ENCODE measurements at regions of chr14 and their contacts with region 1.

Region 1: DNA sequence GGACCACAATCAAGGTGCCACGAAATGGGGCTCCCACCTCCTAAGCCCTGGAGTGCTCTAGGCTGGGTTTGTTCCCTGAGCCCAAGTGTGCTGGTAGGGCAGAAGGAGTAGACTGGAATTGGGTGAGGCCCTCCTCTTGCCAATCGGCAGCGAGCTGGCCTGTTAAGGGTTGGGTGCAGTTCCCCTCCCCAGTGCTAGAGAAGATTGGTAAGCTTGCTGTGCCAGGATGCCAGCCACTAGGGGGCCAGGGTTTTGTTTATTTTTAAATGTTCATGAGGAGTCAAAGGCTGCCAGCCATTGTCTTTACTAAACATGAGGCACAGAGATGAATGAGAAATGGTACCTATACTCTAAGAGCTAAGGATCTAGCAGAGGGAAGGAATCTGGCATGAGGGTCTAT is 79.7 kb downstream of the SPTB start:
- DNase-seq: peak; percentile 50
- H3K4me3 ChIP-seq: no peak overlapping the region
- H3K27ac ChIP-seq: no peak overlapping the region
- H3K4me1 ChIP-seq: peaks cover 2 to 27% of the 10 kb centered on the region in 2 experiments
- H3K27me3 ChIP-seq: no peaks in the 10 kb centered on the region
- CTCF ChIP-seq: peak; percentile 75
- EP300 ChIP-seq: no peak
- RAD21 ChIP-seq: peak; percentile 22; the same call in 1 of the 2 replicates

Region 2: GRCh38 chr14:64788668-64789067 is 11.3 kb before region 1 on chr14:
- CTCF ChIA-PET with region 1: interaction called, 26 read pairs
- POLR2A ChIA-PET with region 1: no interaction called
- DNase-seq: no peak
- H3K4me3 ChIP-seq: no peak overlapping the region
- H3K27ac ChIP-seq: peak overlapping the region in 1 of 2 experiments; percentile 58; a peak in 2 of 4 replicates
- H3K4me1 ChIP-seq: peaks cover 0 to 6% of the 10 kb centered on the region in 2 experiments; a peak in 1 of 4 replicates
- H3K27me3 ChIP-seq: no peaks in the 10 kb centered on the region
- CTCF ChIP-seq: no peak
- EP300 ChIP-seq: peak in 1 of 2 experiments; percentile 63; a peak in 1 of 4 replicates
- RAD21 ChIP-seq: no peak

Region 3: DNA sequence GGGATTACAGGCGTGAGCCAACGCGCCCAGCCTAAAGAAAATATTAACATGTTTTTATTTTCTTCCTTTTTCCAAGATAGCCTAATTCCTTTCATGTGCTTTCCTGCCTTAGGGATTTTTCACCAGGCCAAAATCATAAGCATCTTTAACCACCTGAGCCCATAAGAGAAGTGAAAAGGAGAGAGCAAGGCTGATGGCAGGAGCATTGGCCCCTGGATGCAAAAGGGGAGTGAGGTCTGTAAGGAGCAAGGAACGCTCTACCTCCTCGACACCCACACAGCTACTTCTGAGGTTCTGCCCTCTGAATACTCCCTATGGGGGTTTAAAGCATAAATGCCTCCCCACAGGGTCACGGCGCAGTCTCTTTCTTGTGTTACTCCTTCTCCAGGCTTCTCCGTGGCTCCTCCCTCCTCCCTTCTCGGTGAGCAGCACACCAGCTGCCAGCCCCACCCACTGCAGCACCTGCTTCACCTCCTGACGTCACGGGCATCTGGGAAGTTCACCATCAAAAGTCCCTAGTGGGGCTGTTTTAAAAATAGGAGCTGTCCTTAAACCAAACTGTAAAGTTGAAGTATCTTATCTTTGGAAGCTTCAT is 12.3 kb after region 1 on chr14:
- CTCF ChIA-PET with region 1: interaction called, 63 read pairs
- POLR2A ChIA-PET with region 1: interaction called, 3 read pairs
- DNase-seq: no peak
- H3K4me3 ChIP-seq: no peak overlapping the region
- H3K27ac ChIP-seq: no peak overlapping the region
- H3K4me1 ChIP-seq: peaks cover 4 to 6% of the 10 kb centered on the region in 2 experiments; a peak in 3 of 4 replicates
- H3K27me3 ChIP-seq: no peaks in the 10 kb centered on the region
- CTCF ChIP-seq: no peak
- EP300 ChIP-seq: no peak
- RAD21 ChIP-seq: no peak

Region 4: GRCh38 chr14:64841121-64841651 is 41.2 kb after region 1 on chr14:
- CTCF ChIA-PET with region 1: interaction called, 11 read pairs
- POLR2A ChIA-PET with region 1: no interaction called
- DNase-seq: no peak
- H3K4me3 ChIP-seq: no peak overlapping the region
- H3K27ac ChIP-seq: no peak overlapping the region
- H3K4me1 ChIP-seq: peaks cover 4 to 5% of the 10 kb centered on the region in 2 experiments; a peak in 3 of 4 replicates
- H3K27me3 ChIP-seq: no peaks in the 10 kb centered on the region
- CTCF ChIP-seq: peak; percentile 66
- EP300 ChIP-seq: no peak
- RAD21 ChIP-seq: no peak

Region 5: GRCh38 chr14:64880221-64881121 is 80.5 kb after region 1 on chr14:
- CTCF ChIA-PET with region 1: interaction called, 18 read pairs
- POLR2A ChIA-PET with region 1: no interaction called
- DNase-seq: peak; percentile 89
- H3K4me3 ChIP-seq: peak overlapping the region; percentile 54 to 60
- H3K27ac ChIP-seq: peak overlapping the region in 1 of 2 experiments; percentile 55; a peak in 2 of 4 replicates
- H3K4me1 ChIP-seq: peaks cover 0 to 17% of the 10 kb centered on the region in 2 experiments; a peak in 2 of 4 replicates
- H3K27me3 ChIP-seq: peaks cover 44% of the 10 kb centered on the region
- CTCF ChIP-seq: no peak
- EP300 ChIP-seq: no peak
- RAD21 ChIP-seq: no peak

Region 6: GRCh38 chr14:64899958-64900357 is 100.0 kb after region 1 on chr14:
- CTCF ChIA-PET with region 1: interaction called, 13 read pairs
- POLR2A ChIA-PET with region 1: no interaction called
- DNase-seq: no peak
- H3K4me3 ChIP-seq: no peak overlapping the region
- H3K27ac ChIP-seq: no peak overlapping the region
- H3K4me1 ChIP-seq: no peaks in the 10 kb centered on the region
- H3K27me3 ChIP-seq: no peaks in the 10 kb centered on the region
- CTCF ChIP-seq: no peak
- EP300 ChIP-seq: no peak
- RAD21 ChIP-seq: no peak

Region 7: DNA sequence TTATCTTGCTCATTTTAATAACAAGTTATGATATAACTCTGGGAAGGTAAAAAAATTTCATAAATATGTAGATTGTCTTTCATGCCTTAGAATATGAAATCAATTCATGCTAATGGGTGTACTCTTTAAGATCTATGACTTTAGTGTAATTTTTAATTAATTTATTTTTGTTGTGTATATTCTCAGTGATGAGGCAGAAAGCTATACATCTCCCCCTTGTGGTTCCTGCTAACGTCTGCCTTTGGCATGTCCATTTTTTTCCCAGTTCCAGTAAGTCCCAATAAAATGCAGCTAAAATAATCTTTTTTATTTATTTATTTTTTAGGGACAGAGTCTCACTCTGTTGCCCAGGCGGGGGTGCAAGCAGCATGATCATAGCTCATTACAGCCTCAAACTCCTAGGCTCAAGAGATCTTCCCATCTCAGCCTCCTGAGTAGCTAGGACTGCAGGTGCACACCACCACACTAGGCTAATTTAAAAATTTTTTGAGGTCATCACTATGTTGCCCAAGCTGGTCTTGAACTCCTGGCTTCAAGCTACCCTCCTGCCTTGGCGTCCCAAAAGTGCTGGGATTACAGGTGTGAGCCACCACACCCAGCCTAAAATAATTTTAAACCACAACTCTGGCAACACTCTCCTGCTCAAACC is 111.0 kb after region 1 on chr14:
- CTCF ChIA-PET with region 1: interaction called, 25 read pairs
- POLR2A ChIA-PET with region 1: no interaction called
- DNase-seq: peak; percentile 35
- H3K4me3 ChIP-seq: no peak overlapping the region
- H3K27ac ChIP-seq: no peak overlapping the region
- H3K4me1 ChIP-seq: peaks cover 0 to 9% of the 10 kb centered on the region in 2 experiments; a peak in 2 of 4 replicates
- H3K27me3 ChIP-seq: no peaks in the 10 kb centered on the region
- CTCF ChIP-seq: peak; percentile 87
- EP300 ChIP-seq: no peak
- RAD21 ChIP-seq: peak; percentile 67

Region 8: DNA sequence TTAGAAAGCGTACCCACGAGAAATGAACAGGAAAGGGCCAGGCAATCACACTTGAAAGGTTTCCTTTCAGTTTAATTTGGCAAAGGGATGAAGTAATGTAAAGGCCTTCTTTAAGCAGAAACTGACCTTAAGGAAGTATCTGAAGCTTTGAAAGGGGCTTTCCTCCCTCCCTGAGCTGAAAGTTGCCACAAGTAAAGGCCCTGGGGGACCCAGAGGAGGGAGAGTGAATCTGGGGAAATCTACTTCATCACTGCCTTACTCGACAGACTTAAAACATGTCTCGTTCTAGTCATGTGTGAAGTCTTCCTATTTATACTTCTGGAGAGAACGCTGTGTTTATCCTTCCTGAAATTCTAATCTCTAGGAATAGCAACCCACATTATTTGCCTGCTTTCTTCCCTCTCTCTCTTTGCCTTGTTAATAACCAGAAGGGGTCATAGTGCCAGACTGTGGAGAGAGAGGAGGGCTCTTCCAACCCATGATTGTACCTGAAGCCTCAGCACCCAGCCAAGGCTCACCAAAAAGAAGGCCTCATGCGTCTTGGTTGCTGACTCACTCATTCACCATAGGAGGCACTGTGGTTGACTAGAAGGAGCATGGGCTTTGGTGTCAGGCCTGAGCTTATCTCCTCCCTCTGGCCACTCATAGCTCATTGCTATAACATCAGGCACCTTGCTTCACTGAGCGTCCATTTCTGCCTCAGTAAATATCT is 152.8 kb after region 1 on chr14:
- CTCF ChIA-PET with region 1: no interaction called
- POLR2A ChIA-PET with region 1: no interaction called
- DNase-seq: no peak
- H3K4me3 ChIP-seq: no peak overlapping the region
- H3K27ac ChIP-seq: peak overlapping the region in 1 of 2 experiments; percentile 11; a peak in 2 of 4 replicates
- H3K4me1 ChIP-seq: peaks cover 0 to 30% of the 10 kb centered on the region in 2 experiments; a peak in 2 of 4 replicates
- H3K27me3 ChIP-seq: no peaks in the 10 kb centered on the region
- CTCF ChIP-seq: no peak
- EP300 ChIP-seq: no peak
- RAD21 ChIP-seq: no peak